MCF 10A (cell line): ENCODE measurements at regions of chr16 and their contacts with region 1.

Region 1: DNA sequence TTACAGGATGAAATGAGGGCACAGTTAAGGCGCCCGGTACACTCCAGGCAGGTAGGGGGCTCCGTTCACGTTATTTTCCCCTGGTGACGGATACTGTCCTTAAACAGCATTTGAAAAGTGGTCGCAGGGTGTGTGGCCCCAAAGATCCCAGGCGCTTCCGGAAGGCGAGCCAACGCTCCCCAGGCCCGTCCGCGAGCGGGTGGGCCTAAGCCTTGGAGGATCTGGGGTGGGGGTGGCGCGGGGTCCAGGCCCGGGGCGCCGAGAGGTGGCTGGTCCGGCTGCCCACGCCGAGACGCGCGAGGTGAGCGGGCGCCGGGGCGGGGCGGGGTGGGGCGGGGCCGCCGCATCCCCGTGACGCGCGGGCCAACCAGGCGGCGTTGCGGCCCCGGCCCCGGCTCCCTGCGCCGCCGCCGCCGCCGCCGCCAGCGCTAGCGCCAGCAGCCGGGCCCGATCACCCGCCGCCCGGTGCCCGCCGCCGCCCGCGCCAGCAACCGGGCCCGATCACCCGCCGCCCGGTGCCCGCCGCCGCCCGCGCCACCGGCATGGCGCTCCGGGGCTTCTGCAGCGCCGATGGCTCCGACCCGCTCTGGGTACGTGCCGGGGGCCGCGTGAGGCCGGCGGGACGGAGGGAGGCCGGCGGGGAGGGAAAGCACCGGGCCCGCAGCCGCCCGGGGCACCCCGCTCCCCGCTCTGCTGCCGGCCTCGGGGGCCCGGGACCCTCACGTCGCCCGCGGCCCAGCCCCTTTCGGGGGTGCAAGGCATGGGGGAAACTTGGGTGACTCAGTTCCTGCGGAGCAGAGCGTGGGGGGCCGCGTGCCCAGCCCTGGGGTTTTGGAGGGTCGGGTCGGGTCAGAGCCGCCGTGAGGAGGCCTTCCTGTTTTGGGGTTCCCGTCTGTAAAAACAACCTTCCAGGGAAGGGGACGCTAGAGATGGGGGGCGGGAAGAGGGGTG is at the start of gene ABCC1:
- DNase-seq: no peak
- H3K4me3 Mint-ChIP-seq: peak within 1 kb of the TSS; percentile 87
- H3K27ac Mint-ChIP-seq: peak within 1 kb of the TSS; percentile 92
- H3K4me1 Mint-ChIP-seq: peaks cover 23% of the 10 kb centered on the region
- H3K27me3 Mint-ChIP-seq: no peaks in the 10 kb centered on the region
- CTCF ChIP-seq: no peak
- total RNA-seq, gene ABCC1: 72.5 and 95.3 TPM in 2 replicates

Region 2: GRCh38 chr16:15966420-15967222 is 17.1 kb after region 1 on chr16:
- CTCF ChIA-PET with region 1: interaction called, 7 read pairs
- POLR2A ChIA-PET with region 1: interaction called, 32 read pairs
- intact Hi-C with region 1: no loop called
- DNase-seq: peak; percentile 91
- H3K4me3 Mint-ChIP-seq: peak overlapping the region; percentile 30
- H3K27ac Mint-ChIP-seq: peak overlapping the region; percentile 75
- H3K4me1 Mint-ChIP-seq: peaks cover 24% of the 10 kb centered on the region
- H3K27me3 Mint-ChIP-seq: no peaks in the 10 kb centered on the region
- CTCF ChIP-seq: no peak

Region 3: DNA sequence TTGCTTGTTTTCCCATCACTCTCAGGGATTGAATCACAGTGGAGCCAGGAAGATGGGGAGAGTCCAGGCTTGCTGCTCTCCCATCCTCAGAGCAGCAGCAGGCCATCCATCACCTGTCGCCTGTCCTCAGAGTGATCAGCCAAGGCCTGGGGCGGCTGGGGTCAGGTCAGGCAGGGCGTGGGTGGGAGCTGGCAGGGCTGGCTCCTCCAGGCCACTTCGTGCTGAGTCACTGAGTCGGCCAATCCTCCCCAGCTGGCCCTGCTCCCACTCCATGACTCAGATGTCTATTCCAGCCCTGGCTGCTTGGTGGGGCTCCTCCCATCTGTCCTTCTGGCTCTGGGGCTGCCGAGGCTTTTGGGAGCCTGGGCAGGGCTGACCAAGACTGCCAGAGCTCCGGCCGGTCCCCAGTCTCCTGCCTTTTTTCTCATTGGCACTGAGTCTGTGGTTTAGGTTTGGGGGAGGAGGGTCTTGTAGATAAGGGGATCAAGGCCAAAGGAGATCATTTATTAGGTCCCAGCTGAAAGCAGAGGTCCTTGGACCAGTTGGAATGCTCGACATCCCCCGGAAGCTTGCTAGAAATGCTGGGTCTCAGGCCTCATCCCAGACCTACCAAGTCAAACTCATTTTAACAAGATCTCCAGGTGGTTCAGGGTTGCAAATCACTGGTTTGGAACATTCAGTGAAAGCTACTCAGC is 72.7 kb after region 1 on chr16:
- CTCF ChIA-PET with region 1: interaction called, 3 read pairs
- POLR2A ChIA-PET with region 1: interaction called, 11 read pairs
- intact Hi-C with region 1: loop called (anchors 5 kb)
- DNase-seq: peak; percentile 97
- H3K4me3 Mint-ChIP-seq: peak overlapping the region; percentile 28
- H3K27ac Mint-ChIP-seq: peak overlapping the region; percentile 69
- H3K4me1 Mint-ChIP-seq: peaks cover 44% of the 10 kb centered on the region
- H3K27me3 Mint-ChIP-seq: no peaks in the 10 kb centered on the region
- CTCF ChIP-seq: no peak

Region 4: GRCh38 chr16:16127469-16128116 is 178.1 kb after region 1 on chr16:
- CTCF ChIA-PET with region 1: no interaction called
- POLR2A ChIA-PET with region 1: no interaction called
- intact Hi-C with region 1: no loop called
- DNase-seq: peak; percentile 74
- H3K4me3 Mint-ChIP-seq: no peak overlapping the region
- H3K27ac Mint-ChIP-seq: no peak overlapping the region
- H3K4me1 Mint-ChIP-seq: no peaks in the 10 kb centered on the region
- H3K27me3 Mint-ChIP-seq: no peaks in the 10 kb centered on the region
- CTCF ChIP-seq: peak; percentile 78